ENCODE measurements at regions of chr1 and their contacts with region 1.

Region 1: GRCh38 chr1:32335790-32336590 is at the start of gene MARCKSL1:
- DNase-seq: peak; percentile 70
- ATAC-seq: peak; percentile 44
- H3K4me3 ChIP-seq: peak within 1 kb of the TSS; percentile 86
- H3K27ac ChIP-seq: no peak within 1 kb of the TSS
- H3K4me1 ChIP-seq: peaks cover 67% of the 10 kb centered on the region
- H3K27me3 ChIP-seq: no peaks in the 10 kb centered on the region
- CTCF ChIP-seq: no peak
- total RNA-seq, gene MARCKSL1: 159 and 176 TPM in 2 replicates

Region 2: DNA sequence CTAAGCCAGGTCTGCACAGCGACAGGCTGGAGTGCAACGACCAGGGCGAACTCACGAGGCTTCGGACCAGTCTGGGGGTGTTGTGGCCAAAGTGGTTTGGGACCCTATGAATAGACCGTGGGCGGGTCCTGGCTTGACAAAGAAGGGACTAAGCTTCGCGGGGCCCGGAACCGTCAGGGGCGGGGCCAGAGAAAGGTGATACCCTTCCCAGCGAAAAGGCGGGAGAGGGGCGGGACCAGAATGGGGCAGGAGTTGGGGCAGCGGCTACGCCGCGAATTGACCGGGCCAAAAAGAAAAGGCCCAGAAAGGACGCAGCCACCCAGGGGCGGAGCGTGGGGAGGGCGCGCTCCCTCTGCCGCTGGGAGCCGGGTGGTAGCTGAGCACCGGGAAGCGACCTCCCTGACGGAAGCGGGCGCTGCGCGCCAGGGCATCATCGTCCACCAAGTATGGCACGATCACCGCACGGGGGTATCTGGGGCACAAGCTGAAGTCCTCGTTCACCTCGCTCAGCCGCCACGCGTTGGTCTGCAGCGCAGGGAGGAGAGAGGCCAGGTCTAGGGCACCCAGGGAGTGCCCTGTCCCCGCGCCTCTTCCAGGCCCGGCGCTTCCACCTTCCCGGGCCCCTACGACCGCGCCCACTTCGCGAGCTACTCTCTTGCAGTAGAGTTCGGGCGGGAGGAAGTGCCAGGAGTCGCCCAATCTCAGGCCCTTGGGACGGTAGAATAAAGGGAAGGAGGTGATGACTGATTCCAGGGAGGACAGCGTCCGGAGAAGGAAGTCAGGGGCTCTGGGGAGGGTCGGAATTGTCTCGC is 95.6 kb before region 1 on chr1:
- CTCF ChIA-PET with region 1: no interaction called
- POLR2A ChIA-PET with region 1: no interaction called
- intact Hi-C with region 1: loop called (anchors 5 kb)
- DNase-seq: peak; percentile 75
- ATAC-seq: peak; percentile 63
- H3K4me3 ChIP-seq: peak overlapping the region; percentile 81
- H3K27ac ChIP-seq: peak overlapping the region; percentile 29
- H3K4me1 ChIP-seq: peaks cover 31% of the 10 kb centered on the region
- H3K27me3 ChIP-seq: no peaks in the 10 kb centered on the region
- CTCF ChIP-seq: peak; percentile 51

Region 3: GRCh38 chr1:32351399-32352238 is 15.6 kb after region 1 on chr1:
- CTCF ChIA-PET with region 1: no interaction called
- POLR2A ChIA-PET with region 1: no interaction called
- intact Hi-C with region 1: loop called (anchors 1 kb)
- DNase-seq: peak; percentile 91
- ATAC-seq: peak; percentile 92
- H3K4me3 ChIP-seq: peak overlapping the region; percentile 81
- H3K27ac ChIP-seq: peak overlapping the region; percentile 40
- H3K4me1 ChIP-seq: peaks cover 13% of the 10 kb centered on the region
- H3K27me3 ChIP-seq: no peaks in the 10 kb centered on the region
- CTCF ChIP-seq: peak; percentile 19; the same call in 1 of the 2 replicates

Region 4: DNA sequence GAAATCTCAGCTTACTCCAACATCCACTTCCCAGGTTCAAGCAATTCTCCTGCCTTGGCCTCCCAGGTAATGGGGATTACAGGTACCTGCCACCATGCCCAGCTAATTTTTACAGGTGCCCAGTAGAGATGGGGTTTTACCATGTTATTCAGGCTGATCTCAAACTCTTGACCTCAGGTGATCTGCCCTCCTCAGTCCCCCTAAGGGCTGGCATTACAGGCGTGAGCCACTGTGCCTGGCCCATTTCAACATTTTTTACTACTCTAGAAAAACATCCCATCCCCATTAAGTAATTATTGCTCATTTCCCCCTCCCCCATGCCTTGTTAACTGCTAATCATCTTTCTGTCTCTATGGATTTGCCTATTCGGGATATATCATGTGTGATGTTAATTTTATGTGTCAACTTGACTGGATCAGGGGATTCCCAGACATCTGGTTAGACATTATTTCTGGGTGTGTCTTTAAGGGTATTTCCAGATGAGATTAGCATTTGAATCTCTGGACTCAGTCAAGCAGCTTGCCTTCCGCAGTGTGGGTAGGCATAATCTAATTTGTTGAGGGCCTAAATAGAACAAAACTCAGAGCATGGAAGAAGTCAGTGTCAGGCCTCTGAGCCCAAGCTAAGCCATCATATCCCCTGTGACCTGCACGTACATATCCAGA is 95.9 kb after region 1 on chr1:
- CTCF ChIA-PET with region 1: no interaction called
- POLR2A ChIA-PET with region 1: no interaction called
- intact Hi-C with region 1: no loop called
- DNase-seq: no peak
- ATAC-seq: no peak
- H3K4me3 ChIP-seq: no peak overlapping the region
- H3K27ac ChIP-seq: no peak overlapping the region
- H3K4me1 ChIP-seq: no peaks in the 10 kb centered on the region
- H3K27me3 ChIP-seq: peaks cover 14% of the 10 kb centered on the region
- CTCF ChIP-seq: no peak

Measured in PC-3 (cell line).